ENCODE measurements at regions of chr15 and their contacts with region 1.

Region 1: DNA sequence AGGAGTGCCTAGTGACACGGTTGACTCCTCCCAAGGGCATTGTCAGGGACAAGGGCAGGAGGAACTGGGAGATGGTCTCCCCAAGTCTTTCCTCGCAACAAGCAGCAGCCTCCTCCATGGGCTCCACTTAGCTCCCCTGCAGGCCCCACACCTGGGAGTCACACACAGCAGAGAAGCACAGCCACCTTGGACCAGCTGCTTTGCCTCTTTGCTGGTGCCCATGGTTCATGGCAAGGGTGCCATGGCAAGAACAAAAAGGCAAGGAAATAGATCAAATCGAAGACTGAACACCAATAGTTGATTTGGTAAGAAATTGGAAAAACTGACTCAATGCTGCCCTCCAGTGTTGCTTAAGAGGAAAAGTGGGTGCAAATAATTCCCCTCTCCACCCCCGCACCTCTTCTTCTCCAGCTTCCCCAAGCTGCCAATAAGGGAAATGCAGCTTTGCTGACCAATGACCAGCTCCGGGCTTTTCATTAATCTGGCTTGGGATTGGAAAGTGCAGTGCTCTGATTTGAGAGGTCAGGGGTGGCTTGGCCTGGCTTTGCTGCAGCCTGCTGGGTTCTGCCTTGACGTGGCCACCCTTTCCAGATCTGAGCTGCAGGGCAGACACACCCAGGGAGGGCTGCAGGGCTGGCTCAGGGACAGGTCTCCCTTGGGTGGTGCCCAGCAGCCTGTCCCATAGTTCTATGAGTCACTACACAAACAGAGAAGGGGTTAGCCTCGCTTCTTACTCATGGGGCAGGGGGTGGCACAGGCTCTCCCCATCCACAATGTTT is 162.0 kb downstream of the KLF13 start:
- DNase-seq: peak in 3 of 5 donors; percentile 55 to 66 (median 62)
- H3K4me3 ChIP-seq: no peak overlapping the region
- H3K4me3 Mint-ChIP-seq: peak overlapping the region in 2 of 7 donors; percentile 16 to 49
- H3K27ac ChIP-seq: no peak overlapping the region
- H3K27ac Mint-ChIP-seq: peak overlapping the region in 5 of 8 donors; percentile 14 to 70 (median 50)
- H3K4me1 ChIP-seq: peaks cover 33% of the 10 kb centered on the region
- H3K4me1 Mint-ChIP-seq: peaks cover 26 to 52% (median 40%) of the 10 kb centered on the region in 3 donors
- H3K27me3 ChIP-seq: no peaks in the 10 kb centered on the region
- H3K27me3 Mint-ChIP-seq: peaks cover 0 to 2% of the 10 kb centered on the region in 2 donors

Region 2: DNA sequence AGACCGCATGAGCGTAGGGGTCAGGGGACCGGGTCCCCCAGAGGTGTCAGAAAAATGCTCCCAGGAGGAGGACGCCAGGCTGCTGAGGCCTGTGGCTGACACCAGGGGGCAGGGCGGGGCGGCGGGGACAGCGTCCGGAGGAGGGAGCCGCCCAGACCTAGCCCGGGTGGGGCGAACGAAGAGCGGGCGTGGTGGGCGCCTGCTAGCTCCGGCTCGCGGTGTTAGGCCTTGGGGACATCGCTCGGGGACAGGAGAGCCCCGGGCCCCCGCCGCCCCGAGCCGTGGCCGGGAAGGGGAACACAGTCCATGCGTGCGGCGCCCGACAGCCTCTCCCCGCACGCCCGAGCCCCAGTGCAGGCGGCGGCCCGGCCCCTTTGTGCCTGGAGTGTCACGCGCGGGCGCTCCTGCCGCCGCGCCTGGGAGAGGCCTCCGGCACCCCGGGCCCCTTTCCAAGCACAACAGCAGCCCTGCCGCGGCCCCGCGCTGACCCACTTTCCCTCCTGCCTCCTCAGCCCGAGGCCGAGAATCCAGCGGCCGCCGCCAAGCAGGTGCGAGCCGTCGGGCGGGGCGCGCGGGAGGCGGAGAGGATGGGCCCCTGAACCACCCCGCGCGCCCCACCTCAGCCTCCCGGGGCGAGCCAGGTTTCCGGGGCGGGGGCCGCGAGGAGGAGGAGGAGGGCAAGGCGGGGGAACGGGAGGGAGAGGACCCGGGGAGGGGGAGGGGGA is 273.0 kb before region 1 on chr15:
- CTCF ChIA-PET with region 1: interaction called, 65 read pairs
- POLR2A ChIA-PET with region 1: interaction called, 6 read pairs
- DNase-seq: peak; percentile 69 to 83 (median 73)
- H3K4me3 ChIP-seq: peak overlapping the region; percentile 22
- H3K4me3 Mint-ChIP-seq: peak overlapping the region; percentile 56 to 91 (median 71)
- H3K27ac ChIP-seq: peak overlapping the region; percentile 24
- H3K27ac Mint-ChIP-seq: peak overlapping the region in 7 of 8 donors; percentile 21 to 89 (median 72)
- H3K4me1 ChIP-seq: peaks cover 24% of the 10 kb centered on the region
- H3K4me1 Mint-ChIP-seq: peaks cover 19 to 28% (median 20%) of the 10 kb centered on the region in 3 donors
- H3K27me3 ChIP-seq: no peaks in the 10 kb centered on the region
- H3K27me3 Mint-ChIP-seq: no peaks in the 10 kb centered on the region

Region 3: GRCh38 chr15:31326156-31326732 is 162.4 kb before region 1 on chr15:
- CTCF ChIA-PET with region 1: interaction called, 31 read pairs
- POLR2A ChIA-PET with region 1: interaction called, 16 read pairs
- DNase-seq: peak; percentile 99 to 100 (median 100)
- H3K4me3 ChIP-seq: peak overlapping the region; percentile 52
- H3K4me3 Mint-ChIP-seq: peak overlapping the region; percentile 58 to 95 (median 87)
- H3K27ac ChIP-seq: peak overlapping the region; percentile 85
- H3K27ac Mint-ChIP-seq: peak overlapping the region; percentile 46 to 96 (median 76)
- H3K4me1 ChIP-seq: peaks cover 35% of the 10 kb centered on the region
- H3K4me1 Mint-ChIP-seq: peaks cover 37 to 65% (median 42%) of the 10 kb centered on the region in 3 donors
- H3K27me3 ChIP-seq: no peaks in the 10 kb centered on the region
- H3K27me3 Mint-ChIP-seq: peaks cover 0 to 2% of the 10 kb centered on the region in 2 donors

Region 4: DNA sequence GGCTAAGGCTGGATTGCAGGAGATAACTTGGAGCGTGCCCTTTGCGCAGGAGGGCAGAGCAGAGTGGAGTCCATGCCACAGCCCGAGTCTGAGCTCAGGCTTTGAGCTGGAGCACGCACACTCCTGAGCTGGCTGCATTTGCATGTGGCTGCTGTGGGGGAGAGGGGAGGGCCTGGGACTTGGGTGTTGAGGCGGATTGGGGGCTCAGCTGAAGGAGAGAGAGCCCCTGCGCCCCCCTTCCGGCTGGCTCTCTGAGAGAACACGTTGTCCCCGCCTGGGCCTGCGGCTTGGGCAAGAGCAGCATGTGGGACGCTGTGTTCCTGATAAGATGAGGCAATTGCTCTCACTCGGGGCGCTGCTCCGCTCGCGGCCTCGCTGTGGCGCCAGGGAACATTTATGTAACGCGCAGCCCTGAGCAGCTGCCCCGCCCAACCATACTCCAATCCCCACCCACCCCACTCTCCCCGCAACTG is 122.9 kb before region 1 on chr15:
- CTCF ChIA-PET with region 1: interaction called, 63 read pairs
- POLR2A ChIA-PET with region 1: interaction called, 12 read pairs
- DNase-seq: peak; percentile 67 to 88 (median 82)
- H3K4me3 ChIP-seq: no peak overlapping the region
- H3K4me3 Mint-ChIP-seq: peak overlapping the region; percentile 70 to 95 (median 86)
- H3K27ac ChIP-seq: peak overlapping the region; percentile 33
- H3K27ac Mint-ChIP-seq: peak overlapping the region; percentile 90 to 99 (median 97)
- H3K4me1 ChIP-seq: peaks cover 99% of the 10 kb centered on the region
- H3K4me1 Mint-ChIP-seq: peaks cover 96 to 100% (median 98%) of the 10 kb centered on the region in 3 donors
- H3K27me3 ChIP-seq: no peaks in the 10 kb centered on the region
- H3K27me3 Mint-ChIP-seq: peaks cover 0 to 5% of the 10 kb centered on the region in 2 donors

Region 5: GRCh38 chr15:31396881-31397560 is 91.6 kb before region 1 on chr15:
- CTCF ChIA-PET with region 1: interaction called, 18 read pairs
- POLR2A ChIA-PET with region 1: interaction called, 15 read pairs
- DNase-seq: no peak
- H3K4me3 ChIP-seq: no peak overlapping the region
- H3K4me3 Mint-ChIP-seq: no peak overlapping the region
- H3K27ac ChIP-seq: no peak overlapping the region
- H3K27ac Mint-ChIP-seq: peak overlapping the region in 3 of 8 donors; percentile 52 to 78 (median 72)
- H3K4me1 ChIP-seq: peaks cover 15% of the 10 kb centered on the region
- H3K4me1 Mint-ChIP-seq: peaks cover 30 to 67% (median 33%) of the 10 kb centered on the region in 3 donors
- H3K27me3 ChIP-seq: no peaks in the 10 kb centered on the region
- H3K27me3 Mint-ChIP-seq: peaks cover 0 to under 1% of the 10 kb centered on the region in 2 donors

Region 6: DNA sequence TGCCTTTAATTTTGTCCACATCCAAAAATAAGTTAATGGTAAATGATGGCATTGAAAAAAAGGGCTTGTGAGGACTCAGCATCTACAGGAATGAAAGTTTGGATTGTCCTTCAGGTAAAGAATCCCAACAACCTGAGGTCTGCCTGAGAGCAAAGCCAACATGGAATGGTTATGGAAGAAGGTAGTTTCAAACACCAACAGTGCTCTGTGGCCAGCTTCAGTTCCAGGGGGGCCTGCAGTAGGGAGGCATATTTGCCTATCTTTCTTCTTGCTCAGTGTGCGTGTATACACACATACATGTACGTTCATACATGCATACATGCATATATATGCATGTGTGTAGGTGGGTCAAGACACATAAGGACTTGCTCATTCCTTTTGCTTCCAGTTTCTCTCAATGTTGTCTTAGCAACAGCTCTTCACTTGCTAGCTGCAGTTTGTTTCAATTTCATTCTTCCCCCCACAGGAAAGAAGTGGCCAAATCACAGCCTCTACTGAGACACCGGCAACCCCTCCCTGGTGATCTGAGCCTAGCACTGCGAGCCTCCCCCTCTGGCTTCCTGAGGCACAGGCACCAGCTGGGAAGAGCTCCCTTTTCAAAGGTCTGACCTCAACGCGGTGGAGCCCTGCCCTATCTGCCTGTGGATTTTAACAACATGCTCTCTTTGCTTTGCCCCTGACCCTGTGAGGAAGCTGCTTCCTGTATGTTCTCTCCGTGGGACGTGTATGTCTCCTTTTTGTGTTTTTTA is 15.8 kb before region 1 on chr15:
- CTCF ChIA-PET with region 1: interaction called, 52 read pairs
- POLR2A ChIA-PET with region 1: interaction called, 31 read pairs
- DNase-seq: peak; percentile 16 to 74 (median 63)
- H3K4me3 ChIP-seq: peak overlapping the region; percentile 37
- H3K4me3 Mint-ChIP-seq: peak overlapping the region; percentile 21 to 91 (median 80)
- H3K27ac ChIP-seq: peak overlapping the region; percentile 3
- H3K27ac Mint-ChIP-seq: peak overlapping the region; percentile 78 to 97 (median 94)
- H3K4me1 ChIP-seq: peaks cover 48% of the 10 kb centered on the region
- H3K4me1 Mint-ChIP-seq: peaks cover 51 to 82% (median 52%) of the 10 kb centered on the region in 3 donors
- H3K27me3 ChIP-seq: no peaks in the 10 kb centered on the region
- H3K27me3 Mint-ChIP-seq: no peaks in the 10 kb centered on the region

Region 7: GRCh38 chr15:31516874-31517273 is 28.3 kb after region 1 on chr15:
- CTCF ChIA-PET with region 1: no interaction called
- POLR2A ChIA-PET with region 1: no interaction called
- DNase-seq: no peak
- H3K4me3 ChIP-seq: no peak overlapping the region
- H3K4me3 Mint-ChIP-seq: no peak overlapping the region
- H3K27ac ChIP-seq: no peak overlapping the region
- H3K27ac Mint-ChIP-seq: no peak overlapping the region
- H3K4me1 ChIP-seq: peaks cover 8% of the 10 kb centered on the region
- H3K4me1 Mint-ChIP-seq: peaks cover 12 to 16% (median 15%) of the 10 kb centered on the region in 3 donors
- H3K27me3 ChIP-seq: no peaks in the 10 kb centered on the region
- H3K27me3 Mint-ChIP-seq: peaks cover 16 to 17% of the 10 kb centered on the region in 2 donors

Region 8: DNA sequence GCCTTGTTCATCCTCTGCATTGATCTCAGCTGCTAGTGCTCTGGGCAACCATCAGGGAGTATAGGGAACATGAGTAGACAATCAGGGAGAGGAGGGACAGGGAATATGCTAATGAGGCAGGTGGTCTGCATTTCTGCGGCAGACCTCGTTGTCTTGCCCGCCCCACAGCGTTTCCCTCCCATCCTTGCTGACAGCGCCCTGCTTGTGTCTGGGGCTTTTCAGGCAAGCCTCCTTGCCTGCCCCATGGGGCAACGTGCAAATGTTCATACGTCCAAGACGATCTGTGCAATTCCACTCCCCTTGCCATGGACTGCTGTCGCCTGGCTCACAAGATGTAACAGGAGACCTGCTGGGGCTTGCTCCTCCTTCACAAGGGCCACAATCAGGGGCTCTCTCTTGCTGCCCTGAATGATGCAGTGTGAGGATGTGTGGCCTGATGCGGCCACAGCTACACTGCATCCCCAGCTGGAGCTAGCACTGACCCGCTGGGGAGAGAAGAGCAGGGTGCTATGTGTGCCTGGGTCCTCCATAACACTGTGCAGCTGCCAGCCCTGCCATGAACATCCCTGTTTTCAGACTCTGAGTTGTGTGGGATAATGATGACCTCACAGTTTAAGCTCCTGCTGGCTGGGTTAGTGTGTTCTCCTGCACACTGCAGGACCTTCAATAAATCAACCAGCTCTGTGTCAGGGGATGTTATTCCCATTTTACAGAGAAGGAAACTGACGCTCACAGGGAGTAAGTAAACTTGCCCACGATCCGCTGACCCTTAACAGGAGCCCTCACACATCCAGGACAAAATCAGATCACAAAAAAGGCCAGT is 49.4 kb after region 1 on chr15:
- CTCF ChIA-PET with region 1: no interaction called
- POLR2A ChIA-PET with region 1: no interaction called
- DNase-seq: no peak
- H3K4me3 ChIP-seq: no peak overlapping the region
- H3K4me3 Mint-ChIP-seq: no peak overlapping the region
- H3K27ac ChIP-seq: no peak overlapping the region
- H3K27ac Mint-ChIP-seq: no peak overlapping the region
- H3K4me1 ChIP-seq: no peaks in the 10 kb centered on the region
- H3K4me1 Mint-ChIP-seq: no peaks in the 10 kb centered on the region
- H3K27me3 ChIP-seq: no peaks in the 10 kb centered on the region
- H3K27me3 Mint-ChIP-seq: peaks cover 17 to 65% of the 10 kb centered on the region in 2 donors

Region 9: DNA sequence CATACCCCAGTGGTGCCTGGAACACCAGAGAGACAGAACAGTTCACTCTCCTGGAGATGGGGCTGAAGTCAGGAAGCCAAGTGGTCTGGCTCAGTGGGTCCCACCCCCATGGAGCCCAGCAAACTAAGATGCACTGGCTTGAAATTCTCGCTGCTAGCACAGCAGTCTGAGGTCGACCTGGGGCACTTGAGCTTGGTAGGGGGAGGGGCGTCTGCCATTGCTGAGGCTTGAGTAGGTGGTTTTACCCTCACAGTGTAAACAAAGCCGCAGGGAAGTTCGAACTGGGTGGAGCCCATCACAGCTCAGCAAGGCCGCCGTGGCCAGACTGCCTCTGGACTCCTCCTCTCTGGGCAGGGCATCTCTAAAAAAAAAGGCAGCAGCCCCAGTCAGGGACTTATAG is 110.0 kb after region 1 on chr15:
- CTCF ChIA-PET with region 1: no interaction called
- POLR2A ChIA-PET with region 1: no interaction called
- DNase-seq: no peak
- H3K4me3 ChIP-seq: no peak overlapping the region
- H3K4me3 Mint-ChIP-seq: no peak overlapping the region
- H3K27ac ChIP-seq: no peak overlapping the region
- H3K27ac Mint-ChIP-seq: no peak overlapping the region
- H3K4me1 ChIP-seq: no peaks in the 10 kb centered on the region
- H3K4me1 Mint-ChIP-seq: no peaks in the 10 kb centered on the region
- H3K27me3 ChIP-seq: no peaks in the 10 kb centered on the region
- H3K27me3 Mint-ChIP-seq: peaks cover 7 to 43% of the 10 kb centered on the region in 2 donors